ENCODE measurements at regions of chr11 and their contacts with region 1.

Region 1: GRCh38 chr11:61429691-61430582 is at the starts of genes CPSF7 and SDHAF2:
- DNase-seq: peak; percentile 96 to 98 (median 97)
- H3K4me3 ChIP-seq: peak within 1 kb of the TSS; percentile 89 to 94
- H3K4me3 Mint-ChIP-seq: peak within 1 kb of the TSS; percentile 94 to 99 (median 98)
- H3K27ac ChIP-seq: peak within 1 kb of the TSS; percentile 99
- H3K27ac Mint-ChIP-seq: peak within 1 kb of the TSS; percentile 99 to 100 (median 100)
- H3K4me1 ChIP-seq: peaks cover 75% of the 10 kb centered on the region
- H3K4me1 Mint-ChIP-seq: peaks cover 29 to 82% (median 61%) of the 10 kb centered on the region in 4 donors
- H3K27me3 ChIP-seq: no peaks in the 10 kb centered on the region
- H3K27me3 Mint-ChIP-seq: no peaks in the 10 kb centered on the region
- total RNA-seq, gene CPSF7: 145 to 149 TPM
- total RNA-seq, gene SDHAF2: 54.7 to 60.2 TPM

Region 2: GRCh38 chr11:61361686-61362541 is 68.0 kb before region 1 on chr11 and contains the starts of genes CYB561A3 and TMEM138:
- CTCF ChIA-PET with region 1: interaction called, 5 read pairs
- POLR2A ChIA-PET with region 1: interaction called, 37 read pairs
- intact Hi-C with region 1: loop called (anchors 2 kb)
- DNase-seq: peak; percentile 83 to 90 (median 85)
- H3K4me3 ChIP-seq: peak within 1 kb of the TSS; percentile 87 to 95
- H3K4me3 Mint-ChIP-seq: peak within 1 kb of the TSS; percentile 93 to 100 (median 98)
- H3K27ac ChIP-seq: peak within 1 kb of the TSS; percentile 95
- H3K27ac Mint-ChIP-seq: peak within 1 kb of the TSS; percentile 92 to 100 (median 99)
- H3K4me1 ChIP-seq: peaks cover 27% of the 10 kb centered on the region
- H3K4me1 Mint-ChIP-seq: peaks cover 21 to 51% (median 33%) of the 10 kb centered on the region in 4 donors
- H3K27me3 ChIP-seq: no peaks in the 10 kb centered on the region
- H3K27me3 Mint-ChIP-seq: no peaks in the 10 kb centered on the region
- total RNA-seq, gene CYB561A3: 40.1 to 42.6 TPM
- total RNA-seq, gene TMEM138: 61.2 to 62.5 TPM

Region 3: GRCh38 chr11:61392981-61393595 is 36.8 kb before region 1 on chr11:
- CTCF ChIA-PET with region 1: interaction called, 16 read pairs
- POLR2A ChIA-PET with region 1: interaction called, 42 read pairs
- intact Hi-C with region 1: loop called (anchors 2 kb)
- DNase-seq: peak; percentile 24 to 46 (median 27)
- H3K4me3 ChIP-seq: peak overlapping the region; percentile 77 to 86
- H3K4me3 Mint-ChIP-seq: peak overlapping the region; percentile 91 to 97 (median 96)
- H3K27ac ChIP-seq: peak overlapping the region; percentile 74
- H3K27ac Mint-ChIP-seq: peak overlapping the region; percentile 95 to 99 (median 98)
- H3K4me1 ChIP-seq: peaks cover 26% of the 10 kb centered on the region
- H3K4me1 Mint-ChIP-seq: peaks cover 12 to 27% (median 22%) of the 10 kb centered on the region in 4 donors
- H3K27me3 ChIP-seq: no peaks in the 10 kb centered on the region
- H3K27me3 Mint-ChIP-seq: no peaks in the 10 kb centered on the region

Region 4: DNA sequence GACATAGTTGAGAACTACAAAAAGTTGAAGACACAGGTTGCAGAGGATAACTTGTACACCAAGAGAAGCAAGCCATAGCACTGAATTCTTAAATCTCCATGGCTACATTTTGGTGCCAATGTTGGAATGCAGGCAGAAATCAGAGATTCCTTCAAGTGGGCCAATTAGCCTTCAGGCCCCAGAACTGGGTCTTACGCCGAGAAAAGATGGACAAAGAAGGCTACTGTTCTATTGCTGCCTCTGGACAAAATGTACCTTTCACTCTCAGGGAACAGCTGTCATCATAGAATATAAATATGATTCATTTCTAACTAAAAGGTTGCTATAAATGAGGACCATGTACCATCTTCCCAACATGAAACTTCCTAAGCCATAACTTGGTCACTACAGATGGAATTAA is 23.9 kb before region 1 on chr11:
- CTCF ChIA-PET with region 1: interaction called, 10 read pairs
- POLR2A ChIA-PET with region 1: interaction called, 10 read pairs
- intact Hi-C with region 1: no loop called
- DNase-seq: no peak
- H3K4me3 ChIP-seq: no peak overlapping the region
- H3K4me3 Mint-ChIP-seq: no peak overlapping the region
- H3K27ac ChIP-seq: no peak overlapping the region
- H3K27ac Mint-ChIP-seq: no peak overlapping the region
- H3K4me1 ChIP-seq: no peaks in the 10 kb centered on the region
- H3K4me1 Mint-ChIP-seq: peaks cover 0 to 4% (median 1%) of the 10 kb centered on the region in 4 donors
- H3K27me3 ChIP-seq: no peaks in the 10 kb centered on the region
- H3K27me3 Mint-ChIP-seq: no peaks in the 10 kb centered on the region

Region 5: DNA sequence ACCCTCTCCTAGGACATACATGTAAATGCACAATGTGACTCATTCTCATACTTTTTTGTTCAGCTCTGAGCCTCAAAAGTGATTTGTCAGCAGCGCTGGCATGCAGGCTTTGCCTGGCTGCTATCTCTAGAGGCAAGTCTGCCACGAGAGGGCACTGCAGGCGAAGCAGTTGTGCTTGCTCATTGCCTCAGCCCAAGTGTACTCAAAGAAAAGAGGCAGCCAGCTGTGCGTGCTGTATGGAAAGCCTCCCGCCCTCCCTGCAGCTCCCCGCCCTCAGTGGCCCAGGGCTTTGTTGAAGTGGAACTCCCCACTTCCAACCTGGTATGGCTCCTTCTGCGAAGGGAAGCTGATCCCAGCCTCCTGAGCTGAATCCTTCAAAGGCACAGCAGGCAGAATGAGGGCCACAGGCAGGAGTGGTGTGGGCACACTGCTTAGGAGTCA is 16.3 kb after region 1 on chr11:
- CTCF ChIA-PET with region 1: interaction called, 57 read pairs
- POLR2A ChIA-PET with region 1: interaction called, 4 read pairs
- intact Hi-C with region 1: no loop called
- DNase-seq: peak; percentile 33 to 68 (median 50)
- H3K4me3 ChIP-seq: no peak overlapping the region
- H3K4me3 Mint-ChIP-seq: no peak overlapping the region
- H3K27ac ChIP-seq: no peak overlapping the region
- H3K27ac Mint-ChIP-seq: peak overlapping the region in 2 of 7 donors; percentile 61 to 70
- H3K4me1 ChIP-seq: no peaks in the 10 kb centered on the region
- H3K4me1 Mint-ChIP-seq: peaks cover 11 to 18% (median 13%) of the 10 kb centered on the region in 4 donors
- H3K27me3 ChIP-seq: no peaks in the 10 kb centered on the region
- H3K27me3 Mint-ChIP-seq: no peaks in the 10 kb centered on the region

Measured in CD4-positive, alpha-beta memory T cell (primary cell).